Panc1 (cell line): ENCODE measurements at regions of chr4 and their contacts with region 1.

Region 1: GRCh38 chr4:184474263-184475095 is at the start of gene IRF2:
- DNase-seq: peak; percentile 61
- ATAC-seq: peak; percentile 85
- H3K4me3 ChIP-seq: peak within 1 kb of the TSS; percentile 62 to 89
- H3K27ac ChIP-seq: peak within 1 kb of the TSS; percentile 92
- H3K4me1 ChIP-seq: peaks cover 9% of the 10 kb centered on the region
- H3K27me3 ChIP-seq: no peaks in the 10 kb centered on the region
- CTCF ChIP-seq: no peak
- total RNA-seq, gene IRF2: 16.2 TPM

Region 2: DNA sequence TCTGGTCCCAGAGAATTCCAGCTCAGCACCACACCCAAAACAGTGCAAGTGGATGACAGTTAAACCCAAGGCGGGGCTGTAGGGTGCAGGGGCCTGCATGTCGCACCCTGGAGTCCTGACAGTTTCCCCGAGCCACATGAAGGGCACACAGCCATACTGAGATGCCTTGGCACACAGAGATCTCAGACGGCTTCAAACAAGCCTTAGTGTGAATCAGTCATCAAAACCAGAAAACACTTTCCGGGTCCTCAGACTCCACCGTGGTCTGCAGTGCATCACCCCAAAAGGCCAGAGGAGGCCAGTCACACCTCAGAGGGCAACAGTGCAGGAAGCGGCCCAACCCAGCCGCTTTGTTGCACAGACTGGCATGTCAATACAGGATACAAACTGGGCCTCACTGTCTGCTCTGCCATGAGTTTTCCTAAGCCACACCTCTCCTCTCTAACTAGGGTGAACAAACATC is 192.2 kb before region 1 on chr4:
- CTCF ChIA-PET with region 1: no interaction called
- POLR2A ChIA-PET with region 1: interaction called, 8 read pairs
- in situ Hi-C with region 1: no loop called
- intact Hi-C with region 1: loop called (anchors 10 kb)
- DNase-seq: no peak
- ATAC-seq: peak; percentile 43; the same call in 1 of the 2 replicates
- H3K4me3 ChIP-seq: no peak overlapping the region
- H3K27ac ChIP-seq: no peak overlapping the region
- H3K4me1 ChIP-seq: no peaks in the 10 kb centered on the region; the same call in none of the 2 replicates
- H3K27me3 ChIP-seq: no peaks in the 10 kb centered on the region
- CTCF ChIP-seq: no peak

Region 3: GRCh38 chr4:184538023-184538599 is 63.6 kb after region 1 on chr4:
- CTCF ChIA-PET with region 1: no interaction called
- POLR2A ChIA-PET with region 1: interaction called, 3 read pairs
- in situ Hi-C with region 1: no loop called
- intact Hi-C with region 1: loop called (anchors 10 kb)
- DNase-seq: peak; percentile 74
- ATAC-seq: peak; percentile 95
- H3K4me3 ChIP-seq: peak overlapping the region; percentile 74 to 85
- H3K27ac ChIP-seq: peak overlapping the region; percentile 90
- H3K4me1 ChIP-seq: peaks cover 7% of the 10 kb centered on the region; the same call in 1 of the 2 replicates
- H3K27me3 ChIP-seq: no peaks in the 10 kb centered on the region
- CTCF ChIP-seq: peak; percentile 75

Region 4: DNA sequence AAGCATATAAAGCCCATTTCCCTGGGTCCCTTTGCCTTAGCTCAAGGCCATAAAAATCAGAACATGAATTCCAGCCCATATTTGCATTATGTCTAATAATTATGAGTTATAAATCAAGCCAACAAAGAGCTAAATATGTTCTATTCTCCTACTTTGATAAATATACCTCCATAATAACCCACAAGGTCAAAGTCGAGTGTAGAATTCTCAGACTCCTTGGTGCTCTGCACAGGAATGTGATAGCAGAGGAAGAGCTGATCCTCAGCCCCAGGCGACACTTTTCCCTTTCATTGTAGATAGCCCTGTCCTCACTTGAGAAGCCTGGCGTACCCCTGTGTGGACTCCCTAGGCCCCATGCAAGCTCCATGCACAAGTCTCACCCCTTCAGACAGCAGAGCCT is 89.1 kb after region 1 on chr4:
- CTCF ChIA-PET with region 1: no interaction called
- POLR2A ChIA-PET with region 1: no interaction called
- in situ Hi-C with region 1: no loop called
- intact Hi-C with region 1: no loop called
- DNase-seq: no peak
- ATAC-seq: no peak
- H3K4me3 ChIP-seq: no peak overlapping the region
- H3K27ac ChIP-seq: no peak overlapping the region
- H3K4me1 ChIP-seq: no peaks in the 10 kb centered on the region
- H3K27me3 ChIP-seq: no peaks in the 10 kb centered on the region
- CTCF ChIP-seq: no peak

Region 5: DNA sequence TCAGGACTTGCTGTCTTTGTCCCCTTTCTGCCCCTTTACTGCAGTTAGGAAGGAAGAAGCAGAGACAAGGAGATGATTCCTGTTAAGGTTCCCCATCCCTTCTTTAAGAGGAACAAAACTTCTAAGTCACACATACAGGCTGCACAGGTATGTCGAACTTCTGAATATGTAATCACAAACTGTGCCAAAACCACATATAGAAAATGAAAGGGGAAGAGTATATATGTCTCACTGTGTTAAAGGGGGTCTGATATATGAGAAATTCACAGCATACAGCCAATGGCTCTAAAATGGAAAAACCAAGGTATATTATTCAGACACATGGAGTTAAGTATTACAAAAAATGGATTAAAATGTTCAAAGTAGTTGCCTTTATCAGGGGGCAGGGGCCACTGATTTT is 717.6 kb after region 1 on chr4:
- CTCF ChIA-PET with region 1: no interaction called
- POLR2A ChIA-PET with region 1: no interaction called
- in situ Hi-C with region 1: no loop called
- intact Hi-C with region 1: no loop called
- DNase-seq: no peak
- ATAC-seq: no peak
- H3K4me3 ChIP-seq: no peak overlapping the region
- H3K27ac ChIP-seq: no peak overlapping the region
- H3K4me1 ChIP-seq: peaks cover 5% of the 10 kb centered on the region; the same call in 1 of the 2 replicates
- H3K27me3 ChIP-seq: no peaks in the 10 kb centered on the region
- CTCF ChIP-seq: no peak

Region 6: DNA sequence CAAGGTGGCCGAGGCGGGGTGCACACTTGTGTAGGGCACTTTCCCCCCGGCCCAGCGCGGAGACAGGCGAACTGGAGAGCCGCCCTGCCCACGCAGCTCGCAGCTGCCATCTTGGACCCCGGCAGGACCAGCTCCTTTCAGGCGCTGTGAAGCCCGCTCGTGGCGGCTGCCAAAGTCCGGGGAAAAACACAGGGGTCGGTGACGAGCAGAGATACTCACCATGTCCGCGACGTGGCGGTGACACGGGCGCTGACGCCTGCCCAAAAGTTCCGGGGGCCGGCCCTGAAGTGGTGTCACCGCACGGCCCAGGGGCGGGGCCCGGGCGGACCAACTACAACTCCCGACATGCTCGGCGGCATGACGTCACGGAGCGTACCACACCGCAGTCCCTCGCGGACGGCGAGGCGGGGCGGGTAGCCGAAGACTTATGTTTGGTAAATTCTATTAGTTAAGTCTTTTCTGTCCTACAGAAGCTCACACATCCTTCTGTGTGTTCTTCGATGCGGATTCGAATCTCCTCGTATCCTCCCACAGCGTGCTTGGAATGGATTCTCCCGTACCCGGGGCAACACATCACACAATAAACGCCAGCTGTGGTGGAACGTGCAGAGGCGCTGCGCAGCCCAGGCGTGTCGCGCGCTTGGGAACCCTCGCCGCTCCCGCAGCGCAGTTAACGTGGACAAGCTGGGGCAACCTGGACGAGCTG is 951.3 kb after region 1 on chr4 and contains the start of gene UFSP2:
- CTCF ChIA-PET with region 1: no interaction called
- POLR2A ChIA-PET with region 1: no interaction called
- in situ Hi-C with region 1: no loop called
- intact Hi-C with region 1: no loop called
- DNase-seq: peak; percentile 67
- ATAC-seq: peak; percentile 98
- H3K4me3 ChIP-seq: peak within 1 kb of the TSS; percentile 79 to 91
- H3K27ac ChIP-seq: peak within 1 kb of the TSS; percentile 85
- H3K4me1 ChIP-seq: no peaks in the 10 kb centered on the region; the same call in 1 of the 2 replicates
- H3K27me3 ChIP-seq: no peaks in the 10 kb centered on the region
- CTCF ChIP-seq: no peak
- total RNA-seq, gene UFSP2: 17.0 TPM